Activated CD4-positive, alpha-beta T cell treated with anti-CD3 and anti-CD28 coated beads for 36 hours (primary cell): ENCODE measurements at regions of chr9 and their contacts with region 1.

Region 1: DNA sequence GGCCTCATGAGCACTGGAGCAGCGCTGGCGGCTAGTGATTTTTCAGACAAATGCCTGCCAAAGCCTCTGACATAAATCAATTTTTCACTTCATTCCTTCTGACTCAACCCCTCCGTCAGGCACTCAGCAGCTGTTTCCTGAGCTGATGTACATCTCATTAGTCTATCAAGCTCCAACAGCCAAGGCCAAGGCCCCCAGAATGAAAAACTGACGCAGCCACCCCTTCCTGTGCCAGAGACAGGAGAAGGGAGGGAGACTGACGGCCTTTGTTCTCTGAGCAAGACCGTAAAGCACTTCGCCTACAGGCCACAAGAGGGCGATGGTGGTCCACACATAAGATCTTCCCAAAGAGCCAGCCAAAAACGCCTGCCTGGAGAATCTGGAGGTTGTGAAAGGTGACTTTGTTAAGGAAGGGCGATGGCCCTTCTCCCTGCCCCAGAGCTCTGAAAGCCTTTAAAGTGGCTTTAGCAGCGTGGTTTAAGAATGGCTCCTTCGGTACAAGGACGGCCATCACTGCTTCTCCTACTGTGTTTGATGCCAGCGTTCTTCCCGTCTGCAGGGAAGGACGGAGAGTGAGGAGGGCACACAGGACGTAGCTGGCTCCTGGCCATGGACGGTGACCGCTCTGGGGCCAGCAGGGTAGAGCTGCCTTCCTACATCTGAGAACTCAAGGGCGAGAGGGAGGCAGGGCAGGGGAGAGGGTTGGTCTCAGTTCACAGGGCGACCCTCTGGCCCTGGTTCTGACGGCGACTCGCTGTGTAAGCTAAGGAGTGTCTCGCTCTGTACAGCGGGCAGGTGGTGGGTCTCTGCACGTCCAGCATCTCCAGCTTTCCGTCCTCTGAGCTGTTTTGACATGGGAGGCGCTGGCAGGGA is 37.0 kb downstream of the ALG2 start:
- DNase-seq: peak; percentile 88
- ATAC-seq: peak; percentile 89
- H3K4me3 Mint-ChIP-seq: no peak overlapping the region
- H3K27ac Mint-ChIP-seq: peak overlapping the region; percentile 33
- H3K4me1 Mint-ChIP-seq: peaks cover 42% of the 10 kb centered on the region
- H3K27me3 Mint-ChIP-seq: peaks cover 6% of the 10 kb centered on the region

Region 2: DNA sequence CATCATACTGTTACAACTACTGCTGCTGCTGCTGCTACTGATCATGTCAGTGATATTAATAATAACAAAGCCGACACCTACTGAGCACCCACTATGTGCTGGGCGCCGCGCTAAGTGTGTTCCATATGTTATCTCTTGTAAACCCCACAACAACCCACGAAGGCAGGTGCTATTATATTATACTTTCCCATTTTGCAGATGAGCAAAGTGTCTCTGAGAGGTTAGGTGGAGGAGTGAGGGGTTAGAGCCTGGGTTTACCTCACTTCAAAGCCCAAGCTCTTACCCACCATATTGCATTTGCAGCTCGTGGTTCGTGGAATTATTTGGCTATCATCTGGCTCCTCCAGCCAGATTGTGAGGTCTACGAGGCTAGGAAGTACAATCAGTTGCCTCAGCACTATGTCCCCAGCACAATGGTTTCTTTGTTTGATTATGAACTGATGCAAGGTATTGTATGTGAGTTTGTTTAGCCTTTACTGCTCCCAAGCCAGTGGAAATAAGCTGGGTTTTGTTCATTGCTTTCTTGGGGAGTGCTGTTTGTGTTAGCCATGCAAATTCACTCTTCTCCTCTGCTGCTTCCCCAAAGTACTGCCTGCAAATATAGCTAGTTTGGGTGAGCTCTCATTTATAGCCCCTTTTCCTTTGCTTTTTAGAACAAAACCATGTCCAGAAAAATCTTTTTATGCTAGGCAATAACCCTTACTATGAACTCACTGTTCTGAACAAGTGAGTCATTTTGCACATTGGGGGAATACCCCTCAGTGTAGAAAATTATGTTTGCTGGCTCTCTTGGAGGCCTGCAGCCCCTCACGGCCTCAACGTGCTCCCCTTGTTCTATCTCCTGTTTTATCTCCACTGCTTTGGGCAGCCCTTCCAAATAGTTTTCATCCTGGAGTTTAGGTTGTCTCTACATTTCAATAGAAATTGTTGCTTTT is 10.9 kb before region 1 on chr9:
- CTCF ChIA-PET with region 1: interaction called, 22 read pairs
- POLR2A ChIA-PET with region 1: no interaction called
- intact Hi-C with region 1: no loop called
- DNase-seq: no peak
- ATAC-seq: peak; percentile 86
- H3K4me3 Mint-ChIP-seq: no peak overlapping the region
- H3K27ac Mint-ChIP-seq: no peak overlapping the region
- H3K4me1 Mint-ChIP-seq: peaks cover 5% of the 10 kb centered on the region
- H3K27me3 Mint-ChIP-seq: peaks cover 4% of the 10 kb centered on the region

Region 3: DNA sequence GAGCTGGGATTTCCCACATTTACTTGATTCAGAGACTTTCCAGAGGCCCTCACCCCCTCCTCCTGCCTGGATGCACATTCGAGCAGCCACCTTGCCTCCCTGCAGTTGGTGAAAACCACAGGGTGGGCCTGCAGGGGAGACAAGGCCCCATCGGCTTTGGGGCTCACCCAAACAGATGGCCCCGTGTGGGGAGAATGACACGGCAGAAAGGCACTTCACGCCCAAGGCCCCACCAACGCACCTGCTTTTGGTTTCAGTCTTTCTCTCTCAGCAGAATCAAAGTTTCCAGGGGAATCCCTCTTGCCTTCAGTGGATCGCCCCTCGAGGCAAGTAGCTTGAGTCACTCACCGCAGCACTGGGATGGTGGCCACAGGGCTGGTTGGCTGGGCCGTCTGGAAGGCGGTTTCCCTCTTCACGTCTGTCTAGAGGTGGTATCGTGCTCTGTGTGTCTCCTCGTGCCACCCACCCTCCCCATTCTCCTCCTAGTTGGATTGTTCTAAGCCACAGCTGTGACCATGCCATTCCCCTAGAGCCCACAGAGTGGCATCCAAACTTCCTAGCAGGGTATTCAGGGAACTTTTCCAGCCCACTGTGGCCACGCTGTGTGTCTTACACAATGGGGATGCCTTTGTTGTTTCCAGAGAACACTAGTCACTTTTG is 69.2 kb after region 1 on chr9:
- CTCF ChIA-PET with region 1: interaction called, 5 read pairs
- POLR2A ChIA-PET with region 1: no interaction called
- intact Hi-C with region 1: loop called (anchors 1 to 5 kb)
- DNase-seq: peak; percentile 95
- ATAC-seq: peak; percentile 83
- H3K4me3 Mint-ChIP-seq: peak overlapping the region; percentile 58
- H3K27ac Mint-ChIP-seq: peak overlapping the region; percentile 95
- H3K4me1 Mint-ChIP-seq: peaks cover 60% of the 10 kb centered on the region
- H3K27me3 Mint-ChIP-seq: peaks cover 5% of the 10 kb centered on the region

Region 4: DNA sequence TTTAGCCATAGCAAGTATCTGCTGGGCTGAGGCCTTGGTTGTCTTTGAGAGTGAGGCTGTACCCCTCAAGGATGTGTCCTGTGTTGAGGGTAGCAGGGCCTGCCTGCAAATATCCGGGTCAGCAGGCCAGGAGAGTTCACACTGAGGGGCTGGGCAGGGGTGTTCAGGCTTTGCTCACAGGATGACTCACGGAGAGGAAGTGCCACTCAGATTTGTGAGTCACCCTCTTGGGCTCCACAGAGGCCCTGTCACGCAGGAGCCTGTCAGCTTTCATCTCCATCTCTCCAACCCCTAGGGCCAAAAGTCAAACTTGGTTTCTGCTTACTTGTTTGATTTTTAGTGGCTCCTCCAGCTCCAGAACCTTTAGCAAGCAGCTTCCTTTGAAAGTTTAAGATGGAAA is 248.8 kb after region 1 on chr9:
- CTCF ChIA-PET with region 1: no interaction called
- POLR2A ChIA-PET with region 1: no interaction called
- intact Hi-C with region 1: loop called in 1 of 2 experiments (anchors 5 kb)
- DNase-seq: peak; percentile 79
- ATAC-seq: peak; percentile 100
- H3K4me3 Mint-ChIP-seq: no peak overlapping the region
- H3K27ac Mint-ChIP-seq: peak overlapping the region; percentile 80
- H3K4me1 Mint-ChIP-seq: peaks cover 13% of the 10 kb centered on the region
- H3K27me3 Mint-ChIP-seq: no peaks in the 10 kb centered on the region

Region 5: GRCh38 chr9:100011062-100011681 is 826.5 kb after region 1 on chr9:
- CTCF ChIA-PET with region 1: interaction called, 3 read pairs
- POLR2A ChIA-PET with region 1: no interaction called
- intact Hi-C with region 1: loop called (anchors 1 to 2 kb)
- DNase-seq: peak; percentile 64
- ATAC-seq: peak; percentile 53
- H3K4me3 Mint-ChIP-seq: no peak overlapping the region
- H3K27ac Mint-ChIP-seq: no peak overlapping the region
- H3K4me1 Mint-ChIP-seq: no peaks in the 10 kb centered on the region
- H3K27me3 Mint-ChIP-seq: no peaks in the 10 kb centered on the region